ENCODE measurements at regions of chr6 and their contacts with region 1.

Region 1: GRCh38 chr6:82185948-82186535 is 61.5 kb downstream of the IBTK start:
- DNase-seq: no peak
- ATAC-seq: no peak
- H3K4me3 ChIP-seq: no peak overlapping the region
- H3K27ac ChIP-seq: no peak overlapping the region
- H3K4me1 ChIP-seq: no peaks in the 10 kb centered on the region
- H3K27me3 ChIP-seq: no peaks in the 10 kb centered on the region
- CTCF ChIP-seq: no peak

Region 2: DNA sequence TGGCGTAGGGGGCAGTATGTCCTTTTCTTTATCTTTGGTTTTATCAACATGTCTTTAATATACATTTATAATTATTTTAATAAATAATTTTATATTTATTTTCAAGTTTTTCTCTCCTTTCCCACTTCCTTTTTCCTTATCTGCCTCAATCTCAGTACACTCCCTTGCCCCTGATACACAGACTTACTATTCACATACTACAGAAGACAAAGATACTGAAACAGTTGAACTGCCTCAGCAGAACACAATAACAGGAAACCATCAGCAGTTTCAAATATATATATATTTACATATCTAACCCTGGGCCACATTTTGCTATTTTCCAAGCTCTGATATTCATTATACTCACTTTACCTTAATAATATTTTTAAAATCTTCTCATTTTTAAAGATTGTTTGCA is 41.7 kb after region 1 on chr6:
- intact Hi-C with region 1: loop called in 1 of 2 experiments (anchors 5 kb)
- DNase-seq: no peak
- ATAC-seq: no peak
- H3K4me3 ChIP-seq: no peak overlapping the region
- H3K27ac ChIP-seq: no peak overlapping the region
- H3K4me1 ChIP-seq: no peaks in the 10 kb centered on the region
- H3K27me3 ChIP-seq: no peaks in the 10 kb centered on the region
- CTCF ChIP-seq: no peak

Region 3: GRCh38 chr6:82251942-82252341 is 65.9 kb after region 1 on chr6:
- intact Hi-C with region 1: no loop called
- DNase-seq: no peak
- ATAC-seq: no peak
- H3K4me3 ChIP-seq: no peak overlapping the region
- H3K27ac ChIP-seq: no peak overlapping the region
- H3K4me1 ChIP-seq: no peaks in the 10 kb centered on the region
- H3K27me3 ChIP-seq: no peaks in the 10 kb centered on the region
- CTCF ChIP-seq: peak; percentile 34